B cell (primary cell): ENCODE measurements at regions of chr19 and their contacts with region 1.

Region 1: DNA sequence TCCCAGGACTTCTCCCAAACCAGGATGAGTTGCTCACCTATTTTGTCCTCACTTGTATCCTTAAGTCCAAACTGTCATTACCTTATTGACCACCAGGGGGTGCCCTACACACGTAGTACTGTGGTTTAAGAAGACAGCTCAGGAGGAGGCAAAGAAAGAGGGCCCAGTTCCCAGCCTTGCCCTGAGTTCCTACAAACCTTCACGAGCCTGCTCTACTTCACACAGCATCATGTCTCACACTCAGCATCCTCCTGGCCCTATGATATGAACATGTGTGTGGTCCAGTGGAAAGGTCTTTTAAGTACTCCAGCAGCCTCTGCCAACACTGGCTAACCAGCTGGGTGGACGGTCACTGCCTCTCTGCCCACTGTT is 8.1 kb upstream of the ZNF784 start:
- DNase-seq: peak; percentile 94
- ATAC-seq: peak; percentile 53
- H3K4me3 ChIP-seq: no peak overlapping the region
- H3K4me3 Mint-ChIP-seq: peak overlapping the region; percentile 64
- H3K27ac ChIP-seq: peak overlapping the region in 1 of 2 donors; percentile 11
- H3K27ac Mint-ChIP-seq: peak overlapping the region; percentile 43
- H3K4me1 ChIP-seq: peaks cover 20 to 48% of the 10 kb centered on the region in 2 donors
- H3K4me1 Mint-ChIP-seq: peaks cover 41% of the 10 kb centered on the region
- H3K27me3 ChIP-seq: no peaks in the 10 kb centered on the region
- H3K27me3 Mint-ChIP-seq: no peaks in the 10 kb centered on the region
- CTCF ChIP-seq: peak; percentile 71

Region 2: GRCh38 chr19:55141696-55142095 is 490.8 kb before region 1 on chr19:
- CTCF ChIA-PET with region 1: interaction called, 29 read pairs
- POLR2A ChIA-PET with region 1: no interaction called
- intact Hi-C with region 1: no loop called
- DNase-seq: no peak
- ATAC-seq: no peak
- H3K4me3 ChIP-seq: peak overlapping the region in 1 of 5 experiments; percentile 24
- H3K4me3 Mint-ChIP-seq: no peak overlapping the region
- H3K27ac ChIP-seq: no peak overlapping the region
- H3K27ac Mint-ChIP-seq: no peak overlapping the region
- H3K4me1 ChIP-seq: peaks cover 19 to 20% of the 10 kb centered on the region in 2 donors
- H3K4me1 Mint-ChIP-seq: peaks cover 7% of the 10 kb centered on the region
- H3K27me3 ChIP-seq: peaks cover 0 to 80% (median 26%) of the 10 kb centered on the region in 4 experiments
- H3K27me3 Mint-ChIP-seq: peaks cover 36% of the 10 kb centered on the region
- CTCF ChIP-seq: no peak

Region 3: GRCh38 chr19:55305483-55305882 is 327.0 kb before region 1 on chr19:
- CTCF ChIA-PET with region 1: no interaction called
- POLR2A ChIA-PET with region 1: no interaction called
- intact Hi-C with region 1: no loop called
- DNase-seq: peak; percentile 64
- ATAC-seq: peak; percentile 53
- H3K4me3 ChIP-seq: no peak overlapping the region
- H3K4me3 Mint-ChIP-seq: no peak overlapping the region
- H3K27ac ChIP-seq: no peak overlapping the region
- H3K27ac Mint-ChIP-seq: peak overlapping the region; percentile 37
- H3K4me1 ChIP-seq: peaks cover 8 to 15% of the 10 kb centered on the region in 2 donors
- H3K4me1 Mint-ChIP-seq: peaks cover 9% of the 10 kb centered on the region
- H3K27me3 ChIP-seq: no peaks in the 10 kb centered on the region
- H3K27me3 Mint-ChIP-seq: no peaks in the 10 kb centered on the region
- CTCF ChIP-seq: no peak

Region 4: GRCh38 chr19:55503502-55504251 is 128.8 kb before region 1 on chr19:
- CTCF ChIA-PET with region 1: interaction called, 12 read pairs
- POLR2A ChIA-PET with region 1: interaction called, 5 read pairs
- intact Hi-C with region 1: loop called (anchors 5 kb)
- DNase-seq: peak; percentile 98
- ATAC-seq: peak; percentile 96
- H3K4me3 ChIP-seq: peak overlapping the region in 4 of 5 experiments; percentile 67 to 71 (median 69)
- H3K4me3 Mint-ChIP-seq: peak overlapping the region; percentile 93
- H3K27ac ChIP-seq: peak overlapping the region; percentile 91 to 94
- H3K27ac Mint-ChIP-seq: peak overlapping the region; percentile 94
- H3K4me1 ChIP-seq: peaks cover 4 to 16% of the 10 kb centered on the region in 2 donors
- H3K4me1 Mint-ChIP-seq: peaks cover 16% of the 10 kb centered on the region
- H3K27me3 ChIP-seq: no peaks in the 10 kb centered on the region
- H3K27me3 Mint-ChIP-seq: no peaks in the 10 kb centered on the region
- CTCF ChIP-seq: peak; percentile 99

Region 5: GRCh38 chr19:55605207-55605636 is 27.2 kb before region 1 on chr19:
- CTCF ChIA-PET with region 1: interaction called, 39 read pairs
- POLR2A ChIA-PET with region 1: interaction called, 3 read pairs
- intact Hi-C with region 1: no loop called
- DNase-seq: peak; percentile 97
- ATAC-seq: peak; percentile 76
- H3K4me3 ChIP-seq: peak overlapping the region; percentile 43 to 84 (median 70)
- H3K4me3 Mint-ChIP-seq: peak overlapping the region; percentile 86
- H3K27ac ChIP-seq: peak overlapping the region; percentile 74 to 85
- H3K27ac Mint-ChIP-seq: peak overlapping the region; percentile 94
- H3K4me1 ChIP-seq: peaks cover 17 to 35% of the 10 kb centered on the region in 2 donors
- H3K4me1 Mint-ChIP-seq: peaks cover 56% of the 10 kb centered on the region
- H3K27me3 ChIP-seq: no peaks in the 10 kb centered on the region
- H3K27me3 Mint-ChIP-seq: no peaks in the 10 kb centered on the region
- CTCF ChIP-seq: no peak

Region 6: GRCh38 chr19:55653758-55654539 is 21.5 kb after region 1 on chr19:
- CTCF ChIA-PET with region 1: interaction called, 131 read pairs
- POLR2A ChIA-PET with region 1: interaction called, 16 read pairs
- intact Hi-C with region 1: loop called (anchors 1 kb)
- DNase-seq: peak; percentile 100
- ATAC-seq: peak; percentile 77
- H3K4me3 ChIP-seq: peak overlapping the region; percentile 66 to 98 (median 92)
- H3K4me3 Mint-ChIP-seq: peak overlapping the region; percentile 93
- H3K27ac ChIP-seq: peak overlapping the region; percentile 98 to 100
- H3K27ac Mint-ChIP-seq: peak overlapping the region; percentile 96
- H3K4me1 ChIP-seq: peaks cover 41 to 53% of the 10 kb centered on the region in 2 donors
- H3K4me1 Mint-ChIP-seq: peaks cover 56% of the 10 kb centered on the region
- H3K27me3 ChIP-seq: no peaks in the 10 kb centered on the region
- H3K27me3 Mint-ChIP-seq: no peaks in the 10 kb centered on the region
- CTCF ChIP-seq: peak; percentile 100

Region 7: DNA sequence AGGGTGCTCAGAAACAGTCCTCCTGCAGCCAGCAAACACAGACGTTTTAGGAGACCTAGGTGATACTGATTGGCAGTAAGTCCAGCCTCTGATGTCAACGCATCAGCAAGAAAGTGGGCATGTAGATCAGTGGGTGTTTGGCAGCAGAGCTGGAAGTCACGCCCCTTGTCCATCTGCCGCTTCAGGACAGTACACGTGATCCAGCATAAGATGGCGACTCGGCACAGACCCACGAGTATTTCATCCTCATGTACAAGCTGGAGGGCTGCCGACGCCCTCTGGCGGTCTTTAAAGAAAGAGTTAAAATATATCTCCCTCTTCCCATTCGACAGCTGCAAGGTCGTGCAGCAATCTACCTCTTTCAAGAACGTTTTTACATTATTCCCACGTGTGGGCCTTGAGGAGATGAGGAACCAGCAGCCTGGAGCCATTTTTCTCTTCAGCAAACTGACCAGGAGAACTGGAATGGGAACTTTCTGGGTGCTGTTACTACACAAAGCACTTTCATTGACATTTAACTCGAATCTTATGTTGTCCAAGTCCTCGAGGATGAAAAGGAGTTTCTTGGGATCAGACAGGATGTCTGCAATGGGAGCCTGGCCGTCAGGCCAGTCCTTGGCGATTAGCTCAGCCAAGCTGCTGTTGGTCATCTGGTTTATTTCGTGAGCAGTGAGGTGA is 177.1 kb after region 1 on chr19:
- CTCF ChIA-PET with region 1: interaction called, 107 read pairs
- POLR2A ChIA-PET with region 1: interaction called, 3 read pairs
- intact Hi-C with region 1: no loop called
- DNase-seq: peak; percentile 83
- ATAC-seq: peak; percentile 91
- H3K4me3 ChIP-seq: peak overlapping the region in 2 of 5 experiments; percentile 24 to 25
- H3K4me3 Mint-ChIP-seq: peak overlapping the region; percentile 72
- H3K27ac ChIP-seq: no peak overlapping the region
- H3K27ac Mint-ChIP-seq: peak overlapping the region; percentile 80
- H3K4me1 ChIP-seq: peaks cover 4 to 9% of the 10 kb centered on the region in 2 donors
- H3K4me1 Mint-ChIP-seq: peaks cover 10% of the 10 kb centered on the region
- H3K27me3 ChIP-seq: peaks cover 0 to 3% (median 0%) of the 10 kb centered on the region in 4 experiments
- H3K27me3 Mint-ChIP-seq: peaks cover 26% of the 10 kb centered on the region
- CTCF ChIP-seq: peak; percentile 78